Left cardiac atrium (tissue), 4 donors: ENCODE measurements at regions of chr11 and their contacts with region 1.

Region 1: GRCh38 chr11:95764267-95764898 is 25.2 kb downstream of the FAM76B start:
- DNase-seq: no peak
- ATAC-seq: peak; percentile 61 to 65

Region 2: GRCh38 chr11:95076416-95076815 is 688.0 kb before region 1 on chr11:
- intact Hi-C with region 1: loop called in 1 of 2 experiments (anchors 10 kb)
- DNase-seq: peak; percentile 39
- ATAC-seq: peak; percentile 45 to 74

Region 3: GRCh38 chr11:95156916-95157541 is 607.4 kb before region 1 on chr11:
- intact Hi-C with region 1: loop called (anchors 2 to 5 kb)
- DNase-seq: peak; percentile 37
- ATAC-seq: peak; percentile 77 to 84

Region 4: DNA sequence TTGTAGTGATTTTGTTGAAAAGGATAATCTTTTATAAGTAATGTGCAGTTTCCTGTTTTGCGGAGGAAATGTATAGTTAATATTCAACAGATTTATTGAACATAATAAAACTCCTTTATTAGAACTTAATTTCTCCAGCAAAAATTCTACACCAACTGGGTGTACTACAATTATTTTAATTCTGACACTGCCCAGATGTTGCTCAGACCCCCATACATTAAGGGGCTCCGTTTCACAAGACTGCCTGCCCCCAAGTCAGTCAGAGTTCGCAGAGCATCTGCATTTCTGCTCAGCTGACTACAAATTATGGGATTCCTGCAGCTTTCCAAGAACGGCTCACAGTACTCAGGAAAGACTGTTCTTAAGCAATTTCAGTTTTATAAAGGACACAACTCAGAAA is 32.1 kb after region 1 on chr11:
- intact Hi-C with region 1: no loop called
- DNase-seq: no peak
- ATAC-seq: no peak